Activated CD8-positive, alpha-beta memory T cell treated with anti-CD3 and anti-CD28 coated beads, Interleukin-2, amount 10 ng/mL, durations not matched to agents 7 days and 5 days (primary cell): ENCODE measurements at regions of chr19 and their contacts with region 1.

Region 1: DNA sequence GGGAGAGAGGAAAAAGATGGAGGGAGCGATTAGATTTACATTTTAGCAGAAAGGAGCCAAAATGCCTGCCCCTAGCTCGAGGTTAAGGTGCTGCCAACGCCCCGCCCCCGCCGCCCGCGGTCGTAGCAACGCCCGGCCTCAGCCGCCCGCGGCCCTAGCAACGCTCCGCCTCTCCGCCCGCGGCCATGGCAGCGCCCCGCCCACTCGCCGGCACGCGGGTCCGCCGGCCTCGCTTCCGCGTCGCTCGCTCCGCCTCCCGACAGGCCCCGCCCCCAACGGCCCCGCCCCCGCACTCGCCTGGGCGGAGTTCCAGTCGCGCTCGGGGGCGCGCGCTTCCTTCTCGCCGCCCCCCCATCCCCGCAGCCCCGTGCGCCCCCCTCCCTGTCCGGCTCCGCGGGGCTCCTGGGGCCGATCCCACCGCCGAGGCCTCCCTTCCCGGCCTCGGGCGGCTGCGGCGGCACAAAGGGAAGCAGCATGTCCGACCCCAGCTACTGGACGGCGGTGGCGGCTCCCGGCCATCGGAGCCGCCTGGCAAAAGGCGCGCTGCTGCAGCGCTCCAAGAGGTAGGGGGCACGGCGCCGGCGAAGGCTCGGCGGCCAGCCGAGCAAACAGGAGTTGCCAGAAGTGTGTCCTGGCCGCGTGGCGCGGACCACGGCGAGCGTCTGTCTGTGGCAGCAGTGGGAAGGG is 20.3 kb downstream of the MAST3 start:
- DNase-seq: peak; percentile 96
- ATAC-seq: peak; percentile 74
- H3K4me3 Mint-ChIP-seq: peak overlapping the region; percentile 80
- H3K27ac Mint-ChIP-seq: peak overlapping the region; percentile 90
- H3K4me1 Mint-ChIP-seq: peaks cover 42% of the 10 kb centered on the region
- H3K27me3 Mint-ChIP-seq: no peaks in the 10 kb centered on the region

Region 2: DNA sequence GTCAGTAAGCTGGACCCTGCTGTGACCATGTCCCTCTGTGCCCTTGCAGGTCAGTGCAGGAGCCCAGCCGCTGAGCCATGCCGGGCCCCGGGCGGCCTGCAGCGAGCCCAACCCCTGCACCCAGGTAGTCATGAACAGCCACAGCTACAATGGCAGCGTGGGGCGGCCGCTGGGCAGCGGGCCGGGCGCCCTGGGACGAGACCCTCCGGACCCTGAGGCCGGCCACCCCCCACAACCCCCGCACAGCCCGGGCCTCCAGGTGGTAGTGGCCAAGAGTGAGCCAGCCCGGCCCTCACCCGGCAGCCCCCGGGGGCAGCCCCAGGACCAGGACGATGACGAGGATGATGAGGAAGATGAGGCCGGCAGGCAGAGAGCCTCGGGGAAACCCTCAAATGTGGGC is 144.1 kb before region 1 on chr19:
- CTCF ChIA-PET with region 1: no interaction called
- DNase-seq: no peak
- ATAC-seq: no peak
- H3K4me3 Mint-ChIP-seq: no peak overlapping the region
- H3K27ac Mint-ChIP-seq: no peak overlapping the region
- H3K4me1 Mint-ChIP-seq: no peaks in the 10 kb centered on the region
- H3K27me3 Mint-ChIP-seq: peaks cover 4% of the 10 kb centered on the region

Region 3: DNA sequence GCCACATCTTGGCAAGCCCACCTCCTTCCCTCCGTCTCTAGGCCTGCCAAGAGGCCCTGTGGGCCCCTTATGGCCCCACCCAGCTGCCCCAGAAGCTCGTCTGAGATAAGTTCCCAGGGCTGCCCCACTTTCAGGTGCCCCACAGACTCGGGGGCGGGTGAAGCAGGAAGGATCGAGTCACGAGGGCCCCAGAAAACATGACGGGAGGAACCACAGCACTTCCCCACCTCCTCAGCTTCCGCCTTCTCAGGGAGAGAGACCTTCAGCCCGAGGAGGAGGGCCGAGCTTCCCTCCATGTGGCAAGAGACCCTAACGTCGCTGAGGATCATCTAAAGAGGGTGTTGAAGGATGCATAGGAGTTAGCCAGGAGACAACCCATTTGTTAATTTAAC is 26.6 kb before region 1 on chr19:
- CTCF ChIA-PET with region 1: interaction called, 67 read pairs
- DNase-seq: peak; percentile 93
- ATAC-seq: peak; percentile 78
- H3K4me3 Mint-ChIP-seq: peak overlapping the region; percentile 5
- H3K27ac Mint-ChIP-seq: peak overlapping the region; percentile 93
- H3K4me1 Mint-ChIP-seq: peaks cover 62% of the 10 kb centered on the region
- H3K27me3 Mint-ChIP-seq: no peaks in the 10 kb centered on the region

Region 4: GRCh38 chr19:18104793-18105131 is 13.1 kb before region 1 on chr19:
- CTCF ChIA-PET with region 1: interaction called, 20 read pairs
- DNase-seq: no peak
- ATAC-seq: no peak
- H3K4me3 Mint-ChIP-seq: peak overlapping the region; percentile 69
- H3K27ac Mint-ChIP-seq: no peak overlapping the region
- H3K4me1 Mint-ChIP-seq: peaks cover 21% of the 10 kb centered on the region
- H3K27me3 Mint-ChIP-seq: no peaks in the 10 kb centered on the region

Region 5: DNA sequence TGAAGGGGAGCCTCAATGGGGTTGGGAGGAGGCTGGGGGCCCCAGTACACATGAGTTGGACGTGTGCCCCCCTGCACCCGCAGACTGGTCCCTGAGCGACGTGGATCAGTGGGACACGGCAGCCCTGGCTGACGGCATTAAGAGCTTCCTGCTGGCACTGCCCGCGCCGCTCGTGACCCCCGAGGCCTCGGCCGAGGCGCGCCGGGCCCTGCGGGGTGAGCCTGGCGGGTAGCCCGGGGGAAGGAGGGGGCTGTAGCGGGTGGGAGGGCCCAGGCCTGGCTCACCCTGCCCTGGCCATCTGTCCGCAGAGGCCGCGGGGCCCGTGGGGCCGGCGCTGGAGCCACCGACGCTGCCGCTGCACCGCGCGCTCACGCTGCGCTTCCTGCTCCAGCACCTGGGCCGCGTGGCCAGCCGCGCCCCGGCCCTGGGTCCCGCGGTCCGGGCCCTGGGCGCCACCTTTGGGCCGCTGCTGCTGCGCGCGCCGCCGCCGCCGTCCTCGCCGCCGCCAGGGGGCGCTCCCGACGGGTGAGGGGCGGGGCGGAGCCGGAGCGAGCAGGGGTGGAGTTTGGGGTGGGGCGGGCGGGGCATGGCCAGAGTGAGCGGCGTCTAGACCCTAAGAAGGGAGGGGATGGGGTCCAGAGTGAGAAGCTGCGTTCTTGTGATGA is 43.3 kb after region 1 on chr19:
- CTCF ChIA-PET with region 1: interaction called, 84 read pairs
- DNase-seq: peak; percentile 81
- ATAC-seq: peak; percentile 94
- H3K4me3 Mint-ChIP-seq: peak overlapping the region; percentile 68
- H3K27ac Mint-ChIP-seq: peak overlapping the region; percentile 55
- H3K4me1 Mint-ChIP-seq: peaks cover 7% of the 10 kb centered on the region
- H3K27me3 Mint-ChIP-seq: no peaks in the 10 kb centered on the region

Region 6: GRCh38 chr19:18173572-18174288 is 55.9 kb after region 1 on chr19 and contains the start of gene IFI30:
- CTCF ChIA-PET with region 1: interaction called, 84 read pairs
- DNase-seq: peak; percentile 77
- ATAC-seq: peak; percentile 88
- H3K4me3 Mint-ChIP-seq: peak within 1 kb of the TSS; percentile 83
- H3K27ac Mint-ChIP-seq: peak within 1 kb of the TSS; percentile 84
- H3K4me1 Mint-ChIP-seq: peaks cover 22% of the 10 kb centered on the region
- H3K27me3 Mint-ChIP-seq: no peaks in the 10 kb centered on the region
- total RNA-seq, gene IFI30: 57.1 to 66.2 TPM